G401 (cell line): ENCODE measurements at regions of chr20 and their contacts with region 1.

Region 1: GRCh38 chr20:44196271-44196670 is 9.3 kb upstream of the JPH2 start:
- DNase-seq: no peak

Region 2: GRCh38 chr20:43942661-43943290 is 253.5 kb before region 1 on chr20:
- in situ Hi-C with region 1: no loop called
- DNase-seq: no peak

Region 3: GRCh38 chr20:44398303-44398702 is 202.0 kb after region 1 on chr20:
- in situ Hi-C with region 1: loop called (anchors 10 kb)
- DNase-seq: no peak

Region 4: DNA sequence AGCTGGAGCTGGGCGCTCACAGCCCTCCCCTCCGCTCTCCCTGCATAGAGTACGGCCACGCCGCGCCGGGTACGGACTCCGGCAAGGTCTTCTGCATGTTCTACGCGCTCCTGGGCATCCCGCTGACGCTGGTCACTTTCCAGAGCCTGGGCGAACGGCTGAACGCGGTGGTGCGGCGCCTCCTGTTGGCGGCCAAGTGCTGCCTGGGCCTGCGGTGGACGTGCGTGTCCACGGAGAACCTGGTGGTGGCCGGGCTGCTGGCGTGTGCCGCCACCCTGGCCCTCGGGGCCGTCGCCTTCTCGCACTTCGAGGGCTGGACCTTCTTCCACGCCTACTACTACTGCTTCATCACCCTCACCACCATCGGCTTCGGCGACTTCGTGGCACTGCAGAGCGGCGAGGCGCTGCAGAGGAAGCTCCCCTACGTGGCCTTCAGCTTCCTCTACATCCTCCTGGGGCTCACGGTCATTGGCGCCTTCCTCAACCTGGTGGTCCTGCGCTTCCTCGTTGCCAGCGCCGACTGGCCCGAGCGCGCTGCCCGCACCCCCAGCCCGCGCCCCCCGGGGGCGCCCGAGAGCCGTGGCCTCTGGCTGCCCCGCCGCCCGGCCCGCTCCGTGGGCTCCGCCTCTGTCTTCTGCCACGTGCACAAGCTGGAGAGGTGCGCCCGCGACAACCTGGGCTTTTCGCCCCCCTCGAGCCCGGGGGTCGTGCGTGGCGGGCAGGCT is 554.0 kb after region 1 on chr20:
- in situ Hi-C with region 1: no loop called
- DNase-seq: no peak